AG04449 (cell line): ENCODE measurements at regions of chr14 and their contacts with region 1.

Region 1: GRCh38 chr14:32509632-32510187 is 180.6 kb downstream of the AKAP6 start:
- DNase-seq: peak; percentile 99
- H3K4me3 ChIP-seq: no peak overlapping the region
- CTCF ChIP-seq: no peak

Region 2: DNA sequence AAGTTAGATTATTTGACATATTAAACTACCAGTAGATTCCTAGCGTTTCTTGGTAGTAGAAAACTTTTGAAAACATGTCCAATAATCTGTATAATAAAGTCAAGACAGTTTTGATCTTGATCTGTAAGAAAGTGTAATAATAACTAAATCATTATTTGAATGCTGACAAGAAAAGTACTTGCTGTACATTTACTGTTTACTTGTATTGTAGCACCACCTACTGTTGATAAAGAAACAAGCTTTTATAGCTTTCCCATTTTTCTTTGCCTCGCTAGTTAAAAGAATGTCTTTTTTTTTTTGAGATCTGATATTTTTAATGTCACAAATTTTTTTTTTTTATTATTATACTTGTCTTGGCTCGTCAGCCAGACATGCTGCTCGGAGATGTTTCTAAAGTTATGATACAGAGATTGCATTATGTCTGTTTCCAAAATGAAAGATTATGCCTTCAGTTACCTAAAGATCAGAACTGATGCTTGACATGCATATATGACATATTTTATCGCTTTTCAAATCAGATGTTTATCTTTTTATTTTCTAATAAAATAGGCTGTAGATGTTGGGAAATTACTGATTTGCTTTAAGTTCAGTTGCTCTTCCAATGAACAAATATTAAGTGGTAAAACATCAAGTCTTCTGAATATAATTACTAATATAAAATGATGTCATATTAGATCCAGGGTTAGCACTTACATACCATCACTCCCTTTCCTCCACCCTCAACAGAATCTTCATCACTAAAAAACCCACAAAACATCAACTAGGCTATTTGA is 40.1 kb before region 1 on chr14:
- CTCF ChIA-PET with region 1: interaction called, 28 read pairs
- POLR2A ChIA-PET with region 1: interaction called, 8 read pairs
- DNase-seq: no peak
- H3K4me3 ChIP-seq: no peak overlapping the region
- CTCF ChIP-seq: peak; percentile 26

Region 3: DNA sequence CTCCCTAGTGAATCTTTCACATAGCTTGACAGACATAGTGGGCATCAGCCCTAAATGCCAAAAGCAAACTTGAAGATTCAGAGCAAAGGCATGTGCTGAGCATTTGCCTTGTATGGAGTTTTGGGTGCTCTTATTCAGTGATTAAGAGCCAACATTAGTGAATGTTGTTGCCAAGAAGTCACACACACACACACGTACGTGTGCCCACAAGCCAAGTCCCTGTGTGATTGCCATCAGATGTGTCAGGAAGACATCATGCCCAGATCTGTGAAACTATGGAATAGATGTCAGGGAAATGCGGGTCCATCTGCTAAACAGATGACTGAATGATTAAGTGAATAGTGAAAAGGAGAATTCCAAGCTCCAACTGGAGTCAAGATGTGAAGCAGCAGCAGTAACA is 31.7 kb before region 1 on chr14:
- CTCF ChIA-PET with region 1: interaction called, 20 read pairs
- POLR2A ChIA-PET with region 1: interaction called, 8 read pairs
- DNase-seq: no peak
- H3K4me3 ChIP-seq: no peak overlapping the region
- CTCF ChIP-seq: no peak

Region 4: GRCh38 chr14:32524609-32525375 is 15.1 kb after region 1 on chr14:
- CTCF ChIA-PET with region 1: interaction called, 48 read pairs
- POLR2A ChIA-PET with region 1: no interaction called
- DNase-seq: no peak
- H3K4me3 ChIP-seq: no peak overlapping the region
- CTCF ChIP-seq: no peak